ENCODE measurements at regions of chr9 and their contacts with region 1.

Region 1: GRCh38 chr9:9112001-9112720 is 1312.6 kb upstream of the DMAC1 start:
- DNase-seq: no peak
- ATAC-seq: no peak
- H3K4me3 ChIP-seq: no peak overlapping the region
- H3K4me3 Mint-ChIP-seq: no peak overlapping the region
- H3K27ac ChIP-seq: no peak overlapping the region
- H3K27ac Mint-ChIP-seq: no peak overlapping the region
- H3K4me1 ChIP-seq: no peaks in the 10 kb centered on the region
- H3K4me1 Mint-ChIP-seq: no peaks in the 10 kb centered on the region
- H3K27me3 ChIP-seq: no peaks in the 10 kb centered on the region
- H3K27me3 Mint-ChIP-seq: no peaks in the 10 kb centered on the region
- CTCF ChIP-seq: no peak

Region 2: DNA sequence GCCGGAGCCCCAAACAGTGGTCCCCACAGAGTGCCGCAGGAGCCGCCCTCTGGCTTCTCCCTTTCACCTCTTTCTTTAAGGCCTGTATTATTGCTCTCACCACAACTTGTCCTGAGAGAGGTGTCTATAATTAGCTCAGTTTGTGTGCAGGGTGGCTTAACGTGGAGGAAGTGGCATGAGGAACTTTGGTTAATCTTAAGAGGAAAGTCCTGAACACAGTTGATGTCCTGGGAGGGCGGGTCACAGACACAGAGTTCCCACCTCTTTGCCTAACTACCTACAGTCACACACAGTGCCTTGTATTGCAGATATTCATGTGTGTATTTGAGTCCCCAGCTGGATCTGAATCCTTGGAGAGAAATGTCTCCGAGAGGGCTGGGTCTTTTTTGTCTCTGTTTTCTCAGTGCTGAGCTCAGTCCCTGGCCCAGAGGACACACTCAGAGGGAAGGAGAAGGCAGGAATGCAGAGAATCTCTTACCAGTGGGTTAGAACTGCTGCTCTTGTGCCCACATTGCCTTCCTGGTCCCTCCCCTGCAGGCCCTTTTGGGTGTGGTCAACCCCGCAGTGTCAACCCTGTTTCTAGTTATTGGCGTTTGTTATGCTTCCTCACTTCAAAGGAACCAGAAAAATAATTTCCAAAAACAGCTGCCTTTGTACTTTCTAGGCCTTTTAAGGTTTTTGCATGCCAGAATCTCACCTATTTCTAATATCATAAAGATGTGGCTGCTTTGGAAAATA is 1961.8 kb before region 1 on chr9:
- CTCF ChIA-PET with region 1: no interaction called
- POLR2A ChIA-PET with region 1: no interaction called
- intact Hi-C with region 1: no loop called
- DNase-seq: peak in 5 of 9 experiments; percentile 8 to 34 (median 22)
- ATAC-seq: no peak
- H3K4me3 ChIP-seq: no peak overlapping the region
- H3K4me3 Mint-ChIP-seq: peak overlapping the region; percentile 32
- H3K27ac ChIP-seq: peak overlapping the region in 1 of 2 experiments; percentile 22
- H3K27ac Mint-ChIP-seq: peak overlapping the region; percentile 70
- H3K4me1 ChIP-seq: peaks cover 35% of the 10 kb centered on the region
- H3K4me1 Mint-ChIP-seq: peaks cover 35% of the 10 kb centered on the region
- H3K27me3 ChIP-seq: no peaks in the 10 kb centered on the region
- H3K27me3 Mint-ChIP-seq: no peaks in the 10 kb centered on the region
- CTCF ChIP-seq: no peak

Region 3: DNA sequence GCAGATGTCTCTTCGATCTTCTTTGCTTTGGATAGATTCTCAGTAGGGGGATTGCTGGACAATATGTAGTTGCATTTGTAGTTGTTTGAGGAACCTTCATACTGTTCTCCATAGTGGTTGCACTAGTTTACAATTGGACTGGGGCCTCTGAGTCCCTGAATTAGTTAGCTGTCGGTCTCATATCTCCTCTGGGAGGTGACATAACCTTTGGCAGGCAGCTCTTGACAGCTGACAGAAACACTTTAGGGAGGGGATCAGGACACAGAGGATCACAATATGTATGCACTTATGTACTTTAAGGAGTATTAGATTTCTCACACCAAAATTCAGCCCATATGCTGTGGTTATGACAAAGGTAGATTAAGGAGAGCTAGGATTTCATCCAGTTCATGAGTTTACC is 32.7 kb before region 1 on chr9:
- CTCF ChIA-PET with region 1: no interaction called
- POLR2A ChIA-PET with region 1: no interaction called
- intact Hi-C with region 1: no loop called
- DNase-seq: no peak
- ATAC-seq: no peak
- H3K4me3 ChIP-seq: no peak overlapping the region
- H3K4me3 Mint-ChIP-seq: no peak overlapping the region
- H3K27ac ChIP-seq: no peak overlapping the region
- H3K27ac Mint-ChIP-seq: no peak overlapping the region
- H3K4me1 ChIP-seq: no peaks in the 10 kb centered on the region
- H3K4me1 Mint-ChIP-seq: no peaks in the 10 kb centered on the region
- H3K27me3 ChIP-seq: no peaks in the 10 kb centered on the region
- H3K27me3 Mint-ChIP-seq: no peaks in the 10 kb centered on the region
- CTCF ChIP-seq: no peak

Region 4: DNA sequence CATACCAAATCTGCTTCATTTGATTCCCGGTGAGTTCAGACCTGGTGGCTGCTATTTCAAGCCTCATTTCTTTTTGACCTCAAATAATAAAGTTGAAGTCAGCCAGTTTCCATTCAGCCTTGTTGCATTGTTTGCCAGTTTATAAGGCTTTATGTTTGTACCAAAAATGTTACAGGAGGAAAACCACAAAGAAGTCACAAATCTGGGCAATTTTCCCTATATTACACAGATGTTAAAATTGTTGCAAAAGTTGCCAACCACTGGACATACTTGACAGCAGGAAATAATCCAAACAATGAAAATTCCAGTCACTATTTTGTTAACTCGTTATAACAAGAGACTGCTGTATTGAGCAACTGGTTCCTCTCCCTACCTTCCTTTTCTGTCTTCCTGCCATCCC is 12.5 kb after region 1 on chr9:
- CTCF ChIA-PET with region 1: no interaction called
- POLR2A ChIA-PET with region 1: no interaction called
- intact Hi-C with region 1: loop called in 1 of 2 experiments (anchors 2 kb)
- DNase-seq: no peak
- ATAC-seq: no peak
- H3K4me3 ChIP-seq: no peak overlapping the region
- H3K4me3 Mint-ChIP-seq: no peak overlapping the region
- H3K27ac ChIP-seq: no peak overlapping the region
- H3K27ac Mint-ChIP-seq: no peak overlapping the region
- H3K4me1 ChIP-seq: no peaks in the 10 kb centered on the region
- H3K4me1 Mint-ChIP-seq: no peaks in the 10 kb centered on the region
- H3K27me3 ChIP-seq: no peaks in the 10 kb centered on the region
- H3K27me3 Mint-ChIP-seq: no peaks in the 10 kb centered on the region
- CTCF ChIP-seq: no peak

Measured in CD8-positive, alpha-beta T cell (primary cell).